OCI-LY7 (cell line): ENCODE measurements at regions of chr7 and their contacts with region 1.

Region 1: GRCh38 chr7:1758028-1758858 is 88.2 kb downstream of the ELFN1 start:
- DNase-seq: peak; percentile 73
- H3K4me3 ChIP-seq: no peak overlapping the region
- H3K27ac ChIP-seq: no peak overlapping the region
- H3K4me1 ChIP-seq: peaks cover 45% of the 10 kb centered on the region
- CTCF ChIP-seq: peak; percentile 71

Region 2: DNA sequence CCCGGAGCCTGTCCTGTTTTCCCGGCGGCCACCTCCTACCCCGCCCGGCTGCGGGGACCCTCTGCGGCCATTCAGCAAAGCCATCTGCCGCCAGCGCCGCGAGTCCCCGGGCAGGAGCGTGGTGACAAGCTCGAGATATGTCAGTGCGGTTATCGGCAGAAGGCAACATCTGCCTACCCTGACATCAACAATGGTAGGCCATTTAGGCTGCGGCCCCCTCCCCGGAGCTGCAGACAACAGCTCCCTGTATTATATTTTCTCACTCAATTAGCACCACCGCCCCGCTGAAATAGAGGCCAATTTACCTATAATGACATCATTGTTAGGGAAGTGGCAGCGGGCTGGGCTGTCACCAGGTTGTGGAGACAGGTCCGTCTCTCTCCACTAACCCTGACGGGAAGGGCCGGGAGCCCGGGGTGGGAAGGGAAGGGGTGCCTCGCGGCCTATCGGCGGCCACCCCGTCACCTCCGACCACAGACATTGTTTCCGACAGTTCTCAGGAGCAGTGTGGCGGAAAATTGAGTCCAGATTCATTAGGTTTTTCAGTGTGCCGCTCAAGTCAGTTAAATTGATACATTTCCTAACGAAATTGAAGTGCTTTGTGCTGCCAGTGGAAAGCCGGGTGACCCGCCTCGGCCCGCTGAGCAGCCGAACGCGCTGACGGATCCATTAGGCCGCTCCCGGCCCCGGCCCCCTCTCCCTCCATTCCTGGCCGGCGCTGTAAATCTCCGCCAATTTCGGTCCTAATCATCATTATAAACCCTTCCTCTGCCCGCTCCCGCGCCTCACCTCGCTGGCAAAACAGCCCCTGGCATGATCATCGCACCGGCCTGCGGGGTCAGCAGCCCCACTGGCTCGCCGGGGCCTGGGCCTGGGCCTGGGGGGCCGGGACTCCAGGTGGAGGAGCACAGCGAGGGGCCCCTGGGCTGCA is 482.5 kb before region 1 on chr7:
- CTCF ChIA-PET with region 1: no interaction called
- POLR2A ChIA-PET with region 1: no interaction called
- intact Hi-C with region 1: no loop called
- DNase-seq: no peak
- H3K4me3 ChIP-seq: no peak overlapping the region
- H3K27ac ChIP-seq: no peak overlapping the region
- H3K4me1 ChIP-seq: no peaks in the 10 kb centered on the region
- CTCF ChIP-seq: no peak

Region 3: GRCh38 chr7:1297017-1297960 is 461.0 kb before region 1 on chr7:
- CTCF ChIA-PET with region 1: no interaction called
- POLR2A ChIA-PET with region 1: no interaction called
- intact Hi-C with region 1: no loop called
- DNase-seq: no peak
- H3K4me3 ChIP-seq: no peak overlapping the region
- H3K27ac ChIP-seq: no peak overlapping the region
- H3K4me1 ChIP-seq: no peaks in the 10 kb centered on the region
- CTCF ChIP-seq: no peak

Region 4: GRCh38 chr7:1579481-1580421 is 178.5 kb before region 1 on chr7:
- CTCF ChIA-PET with region 1: no interaction called
- POLR2A ChIA-PET with region 1: no interaction called
- intact Hi-C with region 1: loop called (anchors 1 kb)
- DNase-seq: peak; percentile 66
- H3K4me3 ChIP-seq: no peak overlapping the region
- H3K27ac ChIP-seq: no peak overlapping the region
- H3K4me1 ChIP-seq: no peaks in the 10 kb centered on the region
- CTCF ChIP-seq: peak; percentile 86

Region 5: GRCh38 chr7:1593091-1593866 is 165.0 kb before region 1 on chr7:
- CTCF ChIA-PET with region 1: interaction called, 3 read pairs
- POLR2A ChIA-PET with region 1: no interaction called
- intact Hi-C with region 1: loop called (anchors 5 kb)
- DNase-seq: peak; percentile 25
- H3K4me3 ChIP-seq: no peak overlapping the region
- H3K27ac ChIP-seq: no peak overlapping the region
- H3K4me1 ChIP-seq: peaks cover 21% of the 10 kb centered on the region
- CTCF ChIP-seq: peak; percentile 41; the same call in 1 of the 2 replicates

Region 6: GRCh38 chr7:1664711-1665548 is 93.3 kb before region 1 on chr7:
- CTCF ChIA-PET with region 1: no interaction called
- POLR2A ChIA-PET with region 1: no interaction called
- intact Hi-C with region 1: loop called (anchors 1 kb)
- DNase-seq: peak; percentile 35
- H3K4me3 ChIP-seq: no peak overlapping the region
- H3K27ac ChIP-seq: no peak overlapping the region
- H3K4me1 ChIP-seq: no peaks in the 10 kb centered on the region
- CTCF ChIP-seq: peak; percentile 71

Region 7: DNA sequence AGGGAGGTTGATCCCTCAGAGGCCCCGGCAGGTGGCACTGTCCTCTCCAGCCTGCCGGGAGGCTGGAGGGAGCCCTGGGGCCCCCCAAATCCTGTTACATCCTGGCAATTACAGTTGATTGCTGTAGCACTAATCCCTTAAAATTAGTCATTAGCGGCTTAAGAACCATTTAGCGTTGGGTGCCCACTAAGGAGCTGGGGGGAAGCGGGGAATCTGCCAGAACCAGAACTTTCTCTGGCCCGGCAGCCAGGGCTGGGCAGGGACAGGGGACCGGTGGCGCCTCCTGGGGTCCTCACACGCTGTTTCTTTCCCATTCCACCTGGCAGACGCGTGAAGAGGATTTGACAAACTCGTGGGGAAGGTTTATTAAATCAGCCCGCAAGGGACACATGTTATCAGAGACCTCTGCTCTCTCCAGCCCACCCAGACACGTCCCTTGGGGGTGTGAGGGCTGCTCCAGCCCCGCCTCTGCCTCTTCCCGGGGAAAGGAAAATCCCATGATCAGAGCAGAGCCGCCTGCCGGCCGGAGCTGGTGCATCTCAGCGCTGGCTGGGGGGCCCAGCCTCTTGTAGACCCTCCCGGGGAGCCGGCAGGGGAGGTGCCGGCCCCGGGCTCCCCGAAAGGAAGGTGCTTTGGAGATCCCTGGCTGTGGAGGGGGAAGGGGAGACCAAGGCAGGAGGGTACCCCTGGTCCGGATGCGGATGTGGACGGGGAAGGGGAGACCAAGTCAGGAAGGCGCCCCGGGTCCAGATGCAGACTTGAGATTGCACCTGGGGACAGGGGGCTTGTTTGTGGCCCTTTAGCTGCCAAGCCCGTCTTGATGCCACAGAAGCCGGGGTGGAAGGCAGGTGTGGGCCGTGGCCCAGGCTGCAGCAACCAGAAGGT is 54.5 kb after region 1 on chr7:
- CTCF ChIA-PET with region 1: no interaction called
- POLR2A ChIA-PET with region 1: no interaction called
- intact Hi-C with region 1: no loop called
- DNase-seq: peak; percentile 18
- H3K4me3 ChIP-seq: no peak overlapping the region
- H3K27ac ChIP-seq: no peak overlapping the region
- H3K4me1 ChIP-seq: no peaks in the 10 kb centered on the region
- CTCF ChIP-seq: peak; percentile 45; the same call in 1 of the 2 replicates

Region 8: DNA sequence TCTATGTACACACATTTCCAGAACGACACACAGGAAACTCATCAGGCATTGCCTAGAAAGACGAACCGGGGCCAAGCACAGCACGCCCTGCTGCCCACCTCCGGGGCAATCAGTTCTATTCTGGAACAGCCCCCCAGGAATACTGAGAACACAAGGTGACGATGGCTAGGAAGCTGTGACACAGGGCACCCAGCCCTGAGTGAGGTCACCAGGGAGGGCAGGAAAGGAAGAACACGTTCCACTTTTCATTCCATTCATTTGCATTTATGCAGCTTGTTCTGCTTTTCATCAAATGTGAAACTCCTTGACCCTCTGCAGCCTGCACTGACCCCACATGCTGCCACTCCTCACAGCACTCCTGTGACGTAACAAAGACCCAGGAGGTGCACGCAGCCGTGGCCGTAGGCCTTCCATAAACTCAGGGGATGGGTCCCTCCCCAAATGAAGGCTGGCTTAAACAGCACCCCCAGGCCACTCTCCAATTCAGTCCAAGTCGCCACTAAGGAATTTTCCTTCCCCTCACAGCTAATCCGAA is 445.6 kb after region 1 on chr7:
- CTCF ChIA-PET with region 1: no interaction called
- POLR2A ChIA-PET with region 1: no interaction called
- intact Hi-C with region 1: no loop called
- DNase-seq: peak; percentile 20
- H3K4me3 ChIP-seq: no peak overlapping the region
- H3K27ac ChIP-seq: no peak overlapping the region
- H3K4me1 ChIP-seq: peaks cover 10% of the 10 kb centered on the region
- CTCF ChIP-seq: no peak